GM23248 (cell line): ENCODE measurements at regions of chr14 and their contacts with region 1.

Region 1: DNA sequence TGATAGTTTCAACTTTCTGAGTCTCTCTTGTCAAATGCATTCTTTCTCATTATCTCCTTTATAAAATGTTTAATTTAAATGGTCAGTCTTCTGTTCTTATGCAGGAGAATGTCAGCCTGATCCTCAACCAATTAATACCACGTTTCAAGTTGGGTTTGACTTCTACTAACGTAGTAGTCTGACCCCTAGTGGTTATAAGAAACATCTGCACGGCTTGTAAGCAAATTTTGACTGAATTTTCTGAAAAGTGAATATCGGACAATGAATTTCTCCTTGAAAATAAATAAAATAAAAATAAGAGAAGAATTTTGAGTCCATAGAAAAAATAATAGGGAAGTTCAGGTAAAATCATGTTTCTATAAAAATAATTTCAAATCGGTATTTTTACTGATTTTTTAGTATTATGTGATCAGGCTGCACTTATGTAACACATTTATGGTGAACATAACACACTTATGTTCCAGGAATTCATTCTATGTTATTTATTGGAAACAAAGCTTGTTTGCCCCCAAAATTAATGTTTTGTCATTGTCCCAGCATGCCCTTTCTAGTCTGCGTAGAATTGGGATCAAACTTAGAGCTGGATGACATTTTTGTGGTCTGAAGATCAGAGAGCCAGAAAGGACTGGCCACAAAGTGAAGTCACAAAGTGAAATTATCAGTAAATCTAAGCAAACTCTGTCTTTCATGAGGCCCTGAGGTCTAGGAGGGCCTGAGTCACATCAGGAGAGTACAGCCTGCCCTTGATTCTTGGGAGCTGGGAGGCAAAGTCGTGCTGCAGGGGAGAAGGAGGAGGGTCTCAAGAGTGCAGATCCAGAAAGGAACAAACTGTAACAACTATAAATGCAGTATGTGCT is 101.2 kb upstream of the STXBP6 start:
- DNase-seq: peak; percentile 84
- H3K4me3 ChIP-seq: no peak overlapping the region
- H3K27ac ChIP-seq: no peak overlapping the region
- H3K4me1 ChIP-seq: 0 out of 2 replicates have a peak, but pooled peaks cover 5% of the 10 kb centered on the region
- H3K27me3 ChIP-seq: peaks cover 18% of the 10 kb centered on the region; the same call in 1 of the 2 replicates

Region 2: DNA sequence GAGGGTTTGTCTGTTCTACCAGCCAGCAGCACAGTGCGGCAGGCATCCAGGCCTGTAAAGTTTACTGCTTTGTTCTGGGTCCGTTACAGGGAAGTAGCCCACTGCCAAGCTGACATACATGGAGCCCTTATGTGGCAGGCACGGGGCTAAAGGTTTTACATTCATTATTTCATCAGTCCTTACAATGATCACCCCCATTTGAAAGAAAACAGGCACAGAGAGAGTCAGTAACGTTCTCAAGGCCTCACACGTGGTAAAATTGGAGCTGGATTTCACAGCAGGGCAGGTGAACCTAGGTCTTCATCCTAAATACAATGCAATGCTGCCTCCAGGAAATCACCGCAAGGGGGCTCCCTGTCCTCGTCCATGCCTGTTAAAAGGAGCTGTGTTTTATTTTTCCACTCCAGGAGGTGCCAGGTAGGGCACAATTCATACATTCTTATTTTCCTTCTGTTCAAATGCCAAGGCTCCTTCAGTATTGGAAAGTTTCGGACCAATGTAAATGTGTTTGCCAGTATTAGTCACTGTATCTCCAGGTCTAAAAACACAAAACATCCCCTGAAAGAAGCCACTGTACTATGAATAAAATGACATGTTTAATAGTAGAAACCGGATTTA is 345.0 kb before region 1 on chr14:
- in situ Hi-C with region 1: loop called (anchors 10 kb)
- DNase-seq: peak; percentile 64
- H3K4me3 ChIP-seq: no peak overlapping the region
- H3K27ac ChIP-seq: no peak overlapping the region
- H3K4me1 ChIP-seq: no peaks in the 10 kb centered on the region
- H3K27me3 ChIP-seq: no peaks in the 10 kb centered on the region

Region 3: DNA sequence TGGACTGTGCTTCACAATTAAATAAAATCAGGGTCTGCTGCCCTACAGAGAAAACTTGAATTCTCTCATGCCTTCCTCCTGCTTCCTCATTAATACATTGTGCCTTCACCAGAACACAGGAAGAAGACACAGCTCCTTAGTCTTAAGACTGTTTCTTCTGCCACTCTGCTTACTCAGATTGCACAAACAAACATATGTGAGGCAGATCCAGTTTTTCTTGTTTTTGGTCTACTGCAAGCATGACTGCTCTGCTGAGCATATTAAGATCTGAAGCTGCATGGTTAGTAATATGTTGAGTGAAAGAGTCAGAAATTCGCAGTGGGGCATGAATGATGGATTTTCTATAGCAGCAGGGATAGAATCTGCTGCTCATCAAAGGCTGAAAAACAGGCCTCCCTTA is 219.9 kb after region 1 on chr14:
- in situ Hi-C with region 1: no loop called
- DNase-seq: no peak
- H3K4me3 ChIP-seq: no peak overlapping the region
- H3K27ac ChIP-seq: no peak overlapping the region
- H3K4me1 ChIP-seq: no peaks in the 10 kb centered on the region
- H3K27me3 ChIP-seq: no peaks in the 10 kb centered on the region; the same call in 1 of the 2 replicates